ENCODE measurements at regions of chr16 and their contacts with region 1.

Region 1: GRCh38 chr16:89363621-89364393 is 126.6 kb downstream of the ANKRD11 start:
- DNase-seq: peak; percentile 71
- H3K4me3 Mint-ChIP-seq: no peak overlapping the region
- H3K27ac Mint-ChIP-seq: peak overlapping the region; percentile 77
- H3K4me1 Mint-ChIP-seq: peaks cover 91% of the 10 kb centered on the region
- H3K27me3 Mint-ChIP-seq: no peaks in the 10 kb centered on the region

Region 2: DNA sequence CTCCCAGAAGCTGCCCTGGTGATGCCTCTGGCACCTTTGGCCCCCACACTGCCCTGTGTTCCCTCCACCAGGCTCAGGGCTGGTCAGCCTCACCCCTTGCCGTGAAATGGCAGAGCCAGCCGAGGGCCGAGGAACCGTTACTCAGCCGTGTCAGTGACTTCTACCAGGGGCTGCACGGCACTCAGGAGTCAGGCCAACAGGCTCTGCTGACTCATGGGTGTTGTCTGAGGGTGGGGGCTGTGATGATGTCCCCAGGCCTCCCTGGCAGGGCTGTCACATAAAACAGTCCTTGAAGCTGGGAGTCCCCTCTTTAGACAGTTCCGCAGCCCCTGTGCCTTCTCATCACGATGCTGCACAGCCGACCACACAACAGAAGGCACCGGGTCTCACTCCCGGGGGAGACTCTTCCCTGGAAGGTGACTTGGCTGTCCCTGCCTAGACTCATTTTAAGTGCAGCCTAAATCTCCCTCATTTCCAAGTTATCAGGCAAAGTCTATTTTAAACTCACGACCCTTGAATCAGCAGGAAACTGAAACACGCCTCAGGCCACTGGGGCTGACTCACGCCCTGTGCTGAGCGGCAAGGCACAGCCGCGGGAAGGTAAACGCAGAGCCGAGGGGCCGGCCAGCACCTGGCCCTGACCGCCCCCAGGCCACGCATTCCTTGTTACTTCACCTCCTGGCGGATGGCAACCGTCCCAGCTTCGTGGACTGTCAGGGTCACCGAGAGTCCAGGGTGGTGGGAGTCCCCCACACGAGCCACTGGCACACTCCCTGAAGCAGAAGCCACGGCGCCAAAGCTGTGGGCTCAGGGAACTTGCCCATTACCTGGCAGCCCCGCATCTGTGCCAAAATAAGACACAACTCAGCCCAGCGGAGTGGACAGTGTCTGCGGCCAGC is 43.7 kb before region 1 on chr16:
- CTCF ChIA-PET with region 1: interaction called, 3 read pairs
- POLR2A ChIA-PET with region 1: interaction called, 3 read pairs
- intact Hi-C with region 1: loop called (anchors 2 kb)
- DNase-seq: peak; percentile 74
- H3K4me3 Mint-ChIP-seq: peak overlapping the region; percentile 21
- H3K27ac Mint-ChIP-seq: peak overlapping the region; percentile 76
- H3K4me1 Mint-ChIP-seq: peaks cover 96% of the 10 kb centered on the region
- H3K27me3 Mint-ChIP-seq: no peaks in the 10 kb centered on the region

Region 3: GRCh38 chr16:89331371-89332109 is 32.3 kb before region 1 on chr16:
- CTCF ChIA-PET with region 1: interaction called, 3 read pairs
- POLR2A ChIA-PET with region 1: interaction called, 3 read pairs
- intact Hi-C with region 1: loop called (anchors 1 kb)
- DNase-seq: no peak
- H3K4me3 Mint-ChIP-seq: no peak overlapping the region
- H3K27ac Mint-ChIP-seq: peak overlapping the region; percentile 39
- H3K4me1 Mint-ChIP-seq: peaks cover 84% of the 10 kb centered on the region
- H3K27me3 Mint-ChIP-seq: no peaks in the 10 kb centered on the region

Region 4: GRCh38 chr16:89343501-89344457 is 20.0 kb before region 1 on chr16:
- CTCF ChIA-PET with region 1: no interaction called
- POLR2A ChIA-PET with region 1: no interaction called
- intact Hi-C with region 1: no loop called
- DNase-seq: no peak
- H3K4me3 Mint-ChIP-seq: no peak overlapping the region
- H3K27ac Mint-ChIP-seq: peak overlapping the region; percentile 33
- H3K4me1 Mint-ChIP-seq: peaks cover 83% of the 10 kb centered on the region
- H3K27me3 Mint-ChIP-seq: no peaks in the 10 kb centered on the region

Region 5: DNA sequence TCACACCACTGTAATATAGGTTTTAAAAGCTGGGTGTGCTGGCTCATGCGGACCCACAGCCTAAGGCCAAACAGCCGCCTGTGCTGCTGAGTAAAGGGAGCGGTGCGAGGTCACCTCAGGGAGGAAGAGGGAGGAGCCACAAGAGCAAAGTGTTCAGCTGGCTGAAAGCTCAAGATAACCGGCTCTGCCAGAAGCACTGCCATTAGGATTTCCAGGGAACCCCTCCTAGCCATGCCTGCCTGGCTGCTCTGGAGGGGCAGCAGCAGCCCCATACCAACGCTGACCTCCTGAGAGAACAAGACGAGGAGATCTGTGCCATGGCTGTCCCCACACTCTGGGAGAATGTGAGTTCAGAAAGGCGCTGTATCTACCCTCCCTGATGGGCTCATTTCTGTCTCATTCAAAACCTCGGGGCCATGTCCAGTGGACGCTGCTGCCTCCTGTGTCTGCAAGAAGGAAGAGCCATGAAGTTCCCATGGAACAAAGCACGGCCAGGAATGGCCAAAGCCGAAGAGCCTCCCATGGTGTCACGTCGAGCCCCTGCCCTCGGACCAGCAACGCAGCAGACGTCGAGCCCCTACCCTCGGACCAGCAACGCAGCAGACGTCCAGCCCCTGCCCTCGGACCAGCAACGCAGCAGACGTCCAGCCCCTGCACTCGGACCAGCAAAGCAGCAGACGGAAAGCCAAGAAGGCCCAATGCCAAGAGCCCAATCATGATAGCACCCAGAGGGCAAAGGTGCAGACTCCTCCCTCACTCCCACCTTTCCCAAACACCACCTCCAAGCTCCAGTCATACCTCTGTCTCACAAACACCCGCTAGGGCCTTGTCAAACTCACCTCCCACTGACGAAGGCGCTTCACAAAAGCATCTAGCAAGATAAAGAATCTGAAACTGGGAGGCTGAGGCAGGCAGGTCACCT is 19.5 kb after region 1 on chr16:
- CTCF ChIA-PET with region 1: no interaction called
- POLR2A ChIA-PET with region 1: interaction called, 4 read pairs
- intact Hi-C with region 1: loop called (anchors 1 kb)
- DNase-seq: peak; percentile 53
- H3K4me3 Mint-ChIP-seq: peak overlapping the region; percentile 4
- H3K27ac Mint-ChIP-seq: peak overlapping the region; percentile 82
- H3K4me1 Mint-ChIP-seq: peaks cover 84% of the 10 kb centered on the region
- H3K27me3 Mint-ChIP-seq: no peaks in the 10 kb centered on the region

Region 6: DNA sequence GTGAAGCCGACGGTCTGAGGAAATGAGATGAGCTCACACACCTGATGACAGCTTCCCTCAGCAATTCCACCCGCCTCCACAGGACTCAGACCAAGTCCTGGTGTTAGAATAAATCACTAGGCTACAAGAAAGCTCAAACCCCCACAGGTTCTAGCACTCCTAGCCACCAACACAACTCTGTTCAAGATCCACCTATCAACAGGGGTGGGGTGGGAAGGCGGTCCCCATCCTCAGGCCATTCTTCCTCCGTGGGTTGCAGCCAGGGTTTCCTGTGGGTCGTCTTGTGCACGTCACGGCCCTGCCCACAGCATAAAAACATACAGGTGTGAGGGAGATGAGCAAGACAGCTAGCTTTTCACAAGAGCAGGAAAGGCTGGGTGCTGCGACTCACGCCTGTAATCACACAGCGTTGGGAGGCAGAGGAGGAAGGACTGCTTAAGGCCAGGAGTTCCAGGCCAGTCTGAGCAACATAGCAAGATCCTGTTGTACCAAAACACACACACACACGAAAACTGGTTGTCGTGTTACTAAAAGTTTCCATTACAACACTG is 45.4 kb after region 1 on chr16:
- CTCF ChIA-PET with region 1: no interaction called
- POLR2A ChIA-PET with region 1: no interaction called
- intact Hi-C with region 1: loop called (anchors 2 kb)
- DNase-seq: peak; percentile 78
- H3K4me3 Mint-ChIP-seq: no peak overlapping the region
- H3K27ac Mint-ChIP-seq: peak overlapping the region; percentile 86
- H3K4me1 Mint-ChIP-seq: peaks cover 88% of the 10 kb centered on the region
- H3K27me3 Mint-ChIP-seq: no peaks in the 10 kb centered on the region

Measured in activated CD4-positive, alpha-beta memory T cell treated with anti-CD3 and anti-CD28 coated beads for 36 hours (primary cell).